ENCODE measurements at regions of chr1 and their contacts with region 1.

Region 1: GRCh38 chr1:26602378-26602959 is 72.9 kb downstream of the RPS6KA1 start:
- DNase-seq: no peak
- H3K4me3 ChIP-seq: no peak overlapping the region
- H3K27ac ChIP-seq: peak overlapping the region in 1 of 4 donors; percentile 51
- H3K4me1 ChIP-seq: no peaks in the 10 kb centered on the region
- H3K27me3 ChIP-seq: no peaks in the 10 kb centered on the region
- CTCF ChIP-seq: peak; percentile 79 to 93 (median 87)
- EP300 ChIP-seq: no peak
- POLR2A ChIP-seq: no peak

Region 2: GRCh38 chr1:26500488-26501175 is 101.8 kb before region 1 on chr1:
- intact Hi-C with region 1: loop called (anchors 2 kb)
- DNase-seq: peak; percentile 92
- H3K4me3 ChIP-seq: peak overlapping the region; percentile 60 to 68 (median 63)
- H3K27ac ChIP-seq: peak overlapping the region; percentile 85 to 96 (median 89)
- H3K4me1 ChIP-seq: peaks cover 3 to 17% (median 9%) of the 10 kb centered on the region in 4 donors
- H3K27me3 ChIP-seq: no peaks in the 10 kb centered on the region
- CTCF ChIP-seq: no peak
- EP300 ChIP-seq: no peak
- POLR2A ChIP-seq: no peak

Region 3: GRCh38 chr1:26677306-26678115 is 75.0 kb after region 1 on chr1:
- intact Hi-C with region 1: loop called (anchors 2 kb)
- DNase-seq: peak; percentile 91
- H3K4me3 ChIP-seq: peak overlapping the region in 3 of 4 donors; percentile 5 to 16 (median 13)
- H3K27ac ChIP-seq: peak overlapping the region; percentile 49 to 56 (median 51)
- H3K4me1 ChIP-seq: peaks cover 0 to 14% (median 11%) of the 10 kb centered on the region in 4 donors
- H3K27me3 ChIP-seq: no peaks in the 10 kb centered on the region
- CTCF ChIP-seq: peak in 3 of 4 experiments; percentile 62 to 81 (median 76)
- EP300 ChIP-seq: no peak
- POLR2A ChIP-seq: no peak

Region 4: GRCh38 chr1:26874896-26875295 is 272.4 kb after region 1 on chr1:
- intact Hi-C with region 1: loop called (anchors 5 kb)
- DNase-seq: no peak
- H3K4me3 ChIP-seq: no peak overlapping the region
- H3K27ac ChIP-seq: no peak overlapping the region
- H3K4me1 ChIP-seq: peaks cover 0 to 4% (median 0%) of the 10 kb centered on the region in 4 donors
- H3K27me3 ChIP-seq: no peaks in the 10 kb centered on the region
- CTCF ChIP-seq: no peak
- EP300 ChIP-seq: no peak
- POLR2A ChIP-seq: no peak

Measured in sigmoid colon (tissue), 7 donors.